ENCODE measurements at regions of chr15 and their contacts with region 1.

Region 1: DNA sequence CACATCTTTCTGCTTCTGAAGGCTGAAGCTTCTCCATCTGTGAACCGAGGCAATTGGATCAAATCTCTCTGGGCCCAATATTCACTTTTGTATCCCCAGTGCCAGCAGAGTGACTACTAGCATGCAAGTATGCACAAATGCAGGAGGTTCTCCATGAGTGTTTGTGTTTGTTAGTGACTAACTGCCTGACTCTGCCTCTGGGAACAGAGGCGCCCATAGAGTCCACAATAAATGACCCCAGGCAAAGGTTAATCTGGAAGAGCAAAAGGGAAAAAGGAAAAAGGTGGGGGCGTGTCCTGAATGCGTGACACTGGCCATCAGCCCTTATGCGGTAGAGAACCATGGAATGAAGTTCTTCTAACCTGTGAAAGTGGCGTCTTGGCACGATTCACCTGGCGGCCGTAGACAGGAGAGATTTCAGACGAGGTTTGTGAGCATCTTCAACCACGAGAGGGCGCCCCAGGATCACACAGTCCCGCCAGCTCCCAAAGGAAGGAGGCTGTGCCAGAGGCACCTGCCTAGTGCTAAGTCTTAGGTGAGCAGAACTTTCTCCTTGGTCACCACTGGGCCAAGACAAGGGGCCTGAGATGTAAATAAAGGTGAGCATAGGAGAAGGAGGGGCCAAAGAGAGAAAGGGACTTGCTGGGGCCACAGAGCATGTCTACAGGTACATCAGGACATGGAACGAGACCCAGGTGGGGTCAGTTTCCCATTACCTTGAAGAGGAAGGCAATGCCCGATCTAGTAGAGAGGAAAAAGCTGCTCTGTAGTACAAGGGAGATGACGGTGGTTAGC is 44.2 kb downstream of the RBPMS2 start:
- DNase-seq: peak; percentile 94

Region 2: DNA sequence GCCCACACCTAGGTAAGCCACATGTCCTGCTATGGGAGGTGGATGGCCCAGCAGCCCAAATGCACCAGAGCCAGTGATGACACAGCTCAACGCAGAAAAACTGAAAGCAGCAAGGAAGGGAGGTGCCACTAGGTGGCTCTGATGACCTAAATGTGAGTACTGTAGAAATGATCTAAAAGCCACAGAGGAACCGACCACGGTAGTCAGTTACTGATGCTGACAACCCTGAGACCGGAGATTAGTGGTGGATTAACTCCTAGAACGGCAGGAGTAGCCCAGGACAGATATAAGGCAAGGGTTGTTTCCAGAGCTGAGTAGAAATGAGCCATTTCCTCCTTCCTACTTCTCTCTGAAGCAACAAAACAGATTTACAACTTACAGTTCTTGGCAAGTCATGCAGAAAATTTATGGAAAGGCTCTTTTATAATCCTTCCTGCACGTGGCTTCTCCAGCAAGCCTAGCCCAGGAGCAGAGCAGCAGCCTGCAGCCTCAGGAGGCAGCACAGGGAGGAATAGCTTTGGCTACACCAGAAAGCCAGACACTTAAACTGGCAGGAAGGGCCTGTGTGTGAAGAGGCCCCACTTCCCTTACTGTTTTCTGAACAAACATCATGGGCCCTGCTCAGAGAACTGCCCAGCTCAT is 1120.9 kb before region 1 on chr15:
- intact Hi-C with region 1: no loop called
- DNase-seq: no peak

Region 3: DNA sequence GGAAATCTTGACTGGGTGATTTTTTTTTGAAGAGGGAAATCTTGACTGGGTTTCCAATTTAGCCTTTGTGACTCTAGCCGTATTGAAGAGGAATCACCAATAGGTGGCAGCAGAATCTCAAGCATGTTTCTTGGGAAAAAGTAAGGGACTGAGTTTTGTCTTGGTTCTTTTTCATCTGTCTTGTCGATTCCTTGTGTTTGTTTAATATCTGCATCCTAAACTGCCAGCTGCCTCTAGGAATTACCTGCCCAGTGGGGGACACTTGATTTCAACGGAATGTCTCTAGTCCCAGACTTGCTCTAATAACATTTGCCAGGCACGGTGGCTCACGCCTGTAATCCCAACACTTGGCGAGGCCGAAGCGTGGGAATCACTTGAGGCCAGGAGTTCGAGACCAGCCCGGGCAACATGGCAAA is 45.0 kb before region 1 on chr15:
- intact Hi-C with region 1: loop called (anchors 2 to 5 kb)
- DNase-seq: no peak

Region 4: GRCh38 chr15:64742385-64742784 is 11.2 kb after region 1 on chr15:
- intact Hi-C with region 1: no loop called
- DNase-seq: no peak

Measured in posterior vena cava (tissue), 2 donors.